Breast epithelium (tissue), 4 donors: ENCODE measurements at regions of chr3 and their contacts with region 1.

Region 1: DNA sequence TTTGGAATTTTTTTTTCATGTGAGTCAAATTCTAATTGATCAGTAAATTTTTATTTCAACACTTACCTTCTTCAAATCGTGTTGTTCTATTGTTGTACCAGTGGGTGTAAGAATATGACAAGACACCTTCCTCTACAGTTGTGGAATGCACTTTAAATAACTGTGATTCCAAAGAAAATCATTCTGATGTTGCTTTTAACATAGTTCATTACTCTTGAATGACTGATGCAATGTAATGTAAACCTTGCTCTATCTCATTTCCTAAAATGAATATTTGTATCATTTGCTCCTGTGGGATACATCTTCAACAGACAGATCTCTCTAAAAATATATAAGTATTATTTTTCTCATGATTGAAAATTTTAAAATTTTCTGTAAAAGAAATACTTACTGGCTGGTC is 313.4 kb downstream of the RBMS3 start:
- DNase-seq: no peak
- H3K4me3 ChIP-seq: no peak overlapping the region
- H3K27ac ChIP-seq: no peak overlapping the region
- H3K4me1 ChIP-seq: no peaks in the 10 kb centered on the region
- H3K27me3 ChIP-seq: no peaks in the 10 kb centered on the region
- CTCF ChIP-seq: no peak
- POLR2A ChIP-seq: no peak

Region 2: DNA sequence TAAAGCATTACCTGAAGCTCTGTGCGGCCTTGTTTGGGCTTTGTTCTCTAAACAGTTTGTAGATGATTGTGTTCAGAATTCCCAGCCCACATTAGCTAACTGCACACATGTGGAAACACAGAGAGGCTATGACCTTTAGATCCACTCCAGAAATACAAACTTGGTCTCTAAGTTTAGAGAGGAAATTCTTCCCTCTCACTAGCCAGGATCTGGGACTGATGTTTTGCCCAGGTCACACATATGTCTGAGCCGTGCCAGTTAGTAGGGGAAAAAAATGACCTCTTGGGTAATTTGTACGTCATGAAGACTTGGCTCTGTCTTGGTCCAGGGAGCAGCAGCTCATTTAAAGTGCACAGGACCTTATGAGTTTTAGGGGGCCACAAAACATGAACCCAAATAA is 90.3 kb before region 1 on chr3:
- intact Hi-C with region 1: loop called (anchors 5 kb)
- DNase-seq: no peak
- H3K4me3 ChIP-seq: no peak overlapping the region
- H3K27ac ChIP-seq: peak overlapping the region in 1 of 2 donors; percentile 71
- H3K4me1 ChIP-seq: no peaks in the 10 kb centered on the region
- H3K27me3 ChIP-seq: no peaks in the 10 kb centered on the region
- CTCF ChIP-seq: no peak
- POLR2A ChIP-seq: no peak

Region 3: GRCh38 chr3:29561651-29562149 is 32.6 kb before region 1 on chr3:
- intact Hi-C with region 1: loop called (anchors 2 kb)
- DNase-seq: no peak
- H3K4me3 ChIP-seq: no peak overlapping the region
- H3K27ac ChIP-seq: no peak overlapping the region
- H3K4me1 ChIP-seq: no peaks in the 10 kb centered on the region
- H3K27me3 ChIP-seq: no peaks in the 10 kb centered on the region
- CTCF ChIP-seq: no peak
- POLR2A ChIP-seq: no peak